Activated T-helper 2 cell treated with anti-CD3 and anti-CD28 coated beads, Interferon-gamma antibody, Interleukin-2, Interleukin-4, amounts not matched to agents 10 μg/mL and 5 μg/mL and 100 μg/mL, durations not matched to agents 14 hours and 24 hours and 36 hours (primary cell): ENCODE measurements at regions of chr6 and their contacts with region 1.

Region 1: DNA sequence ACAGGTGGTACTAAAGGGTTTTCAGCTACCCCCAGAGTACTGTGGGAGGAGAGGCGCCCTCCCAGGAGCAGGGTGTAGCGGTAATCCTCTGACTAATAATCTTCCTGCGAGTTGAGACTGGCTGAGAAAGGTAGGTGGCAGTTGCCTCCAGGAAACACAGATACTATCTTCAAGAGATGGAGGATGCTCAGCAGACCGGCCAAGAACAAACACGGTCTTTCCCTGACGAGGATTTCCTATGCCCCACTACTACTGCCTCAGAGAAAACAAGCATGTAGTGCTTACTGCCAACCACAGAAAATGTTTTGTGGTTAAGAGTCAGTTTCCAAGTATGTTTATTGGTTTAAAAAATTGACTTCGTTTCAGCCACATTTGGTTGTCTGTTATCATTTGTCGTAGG is 26.8 kb downstream of the C6orf89 start:
- DNase-seq: peak; percentile 78
- H3K4me3 Mint-ChIP-seq: peak overlapping the region; percentile 71
- H3K27ac Mint-ChIP-seq: peak overlapping the region; percentile 80
- H3K4me1 Mint-ChIP-seq: peaks cover 51% of the 10 kb centered on the region
- H3K27me3 Mint-ChIP-seq: no peaks in the 10 kb centered on the region

Region 2: GRCh38 chr6:36697481-36697903 is 215.1 kb before region 1 on chr6 and contains the start of gene RAB44:
- intact Hi-C with region 1: loop called (anchors 5 kb)
- DNase-seq: no peak
- H3K4me3 Mint-ChIP-seq: no peak within 1 kb of the TSS
- H3K27ac Mint-ChIP-seq: no peak within 1 kb of the TSS
- H3K4me1 Mint-ChIP-seq: peaks cover 33% of the 10 kb centered on the region
- H3K27me3 Mint-ChIP-seq: peaks cover 7% of the 10 kb centered on the region
- total RNA-seq, gene RAB44: not detected in 2 replicates

Region 3: DNA sequence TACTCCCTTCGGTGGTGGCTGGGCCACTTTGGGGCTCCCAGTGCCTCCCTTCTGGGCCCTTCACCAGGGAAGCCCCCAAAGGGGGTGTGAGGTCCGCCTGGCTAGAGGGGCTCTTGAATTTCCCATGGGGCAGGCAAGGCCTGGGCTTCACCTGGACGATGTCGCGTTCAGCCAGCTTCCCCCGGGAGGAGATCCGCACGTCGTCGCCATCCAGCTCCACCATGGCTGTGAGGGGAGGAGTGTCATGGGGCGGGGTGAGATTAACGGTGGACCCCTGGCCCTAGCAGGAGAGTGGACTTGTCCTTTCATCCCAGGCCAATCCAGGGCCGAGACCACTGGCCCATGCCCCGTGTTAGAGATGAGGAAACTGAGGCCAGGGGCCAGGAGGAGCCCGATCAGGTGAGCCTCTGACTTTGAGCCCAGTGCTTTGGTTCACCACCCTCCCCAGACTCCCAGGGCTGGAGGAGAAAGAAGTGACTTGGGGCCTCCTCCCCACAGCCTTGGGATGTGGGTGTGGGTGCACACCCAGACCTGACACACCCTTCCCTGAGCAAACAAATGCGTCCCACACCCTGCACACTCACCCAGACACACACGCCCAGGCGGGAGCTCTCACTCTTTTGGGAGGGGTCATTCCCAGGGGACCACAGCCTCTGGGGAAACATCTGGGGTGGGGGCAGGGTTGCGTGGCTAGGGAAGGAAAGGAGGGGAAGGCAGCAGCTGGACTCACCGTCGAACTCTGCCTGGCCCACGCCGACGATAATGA is 168.9 kb before region 1 on chr6:
- intact Hi-C with region 1: no loop called
- DNase-seq: no peak
- H3K4me3 Mint-ChIP-seq: no peak overlapping the region
- H3K27ac Mint-ChIP-seq: no peak overlapping the region
- H3K4me1 Mint-ChIP-seq: peaks cover 5% of the 10 kb centered on the region
- H3K27me3 Mint-ChIP-seq: peaks cover 4% of the 10 kb centered on the region

Region 4: GRCh38 chr6:36765594-36766398 is 146.8 kb before region 1 on chr6:
- intact Hi-C with region 1: no loop called
- DNase-seq: peak; percentile 74
- H3K4me3 Mint-ChIP-seq: no peak overlapping the region
- H3K27ac Mint-ChIP-seq: peak overlapping the region; percentile 0
- H3K4me1 Mint-ChIP-seq: peaks cover 30% of the 10 kb centered on the region
- H3K27me3 Mint-ChIP-seq: no peaks in the 10 kb centered on the region

Region 5: DNA sequence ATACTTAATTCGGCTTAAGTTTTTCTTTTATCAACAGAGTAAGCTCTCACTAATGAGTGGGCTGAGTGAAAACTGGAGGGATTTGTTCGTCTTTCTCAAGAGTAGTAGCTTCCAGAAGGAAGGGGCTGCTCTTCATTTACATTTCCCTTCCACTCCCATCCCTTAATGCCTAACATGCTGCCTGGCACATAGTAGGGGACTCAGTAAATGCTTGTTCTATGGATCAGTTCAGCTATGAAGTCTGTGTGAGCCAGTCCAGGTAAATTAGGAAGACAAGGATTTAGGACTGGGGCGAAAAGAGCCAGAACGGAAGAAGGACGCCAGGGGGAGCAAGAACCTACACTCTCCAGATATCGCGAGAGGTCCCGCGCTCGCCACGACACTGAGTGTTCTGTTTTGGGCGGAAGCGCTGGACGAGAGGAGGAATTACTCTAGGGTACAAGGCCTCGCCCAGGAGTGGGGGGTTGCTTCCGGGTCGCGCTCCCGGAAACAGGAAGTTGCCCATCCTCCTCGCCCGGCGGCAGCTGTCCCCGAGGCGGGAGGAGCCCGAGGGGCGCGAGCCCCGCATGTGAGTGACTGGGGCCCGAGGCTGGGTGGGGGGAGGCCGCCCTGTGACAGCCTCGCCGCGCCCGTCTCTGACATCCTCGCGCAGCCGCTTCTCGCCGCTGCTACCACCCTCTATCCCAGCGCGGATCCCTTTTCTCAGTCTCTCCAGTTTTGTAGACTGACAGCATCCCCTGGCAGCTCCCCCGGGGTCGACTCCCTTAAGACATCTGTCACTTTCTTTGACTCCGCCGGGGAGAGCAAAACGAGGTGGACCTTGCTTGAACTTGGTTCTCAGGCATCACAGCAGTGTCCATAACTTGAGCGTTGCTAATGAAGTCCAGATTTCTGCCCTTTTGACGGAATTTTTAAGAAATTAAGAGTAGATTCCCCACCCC is 26.9 kb before region 1 on chr6 and contains the start of gene C6orf89:
- intact Hi-C with region 1: loop called (anchors 1 kb)
- DNase-seq: peak; percentile 95
- H3K4me3 Mint-ChIP-seq: peak within 1 kb of the TSS; percentile 87
- H3K27ac Mint-ChIP-seq: peak within 1 kb of the TSS; percentile 80
- H3K4me1 Mint-ChIP-seq: peaks cover 32% of the 10 kb centered on the region
- H3K27me3 Mint-ChIP-seq: no peaks in the 10 kb centered on the region
- total RNA-seq, gene C6orf89: 28.4 and 29.9 TPM in 2 replicates

Region 6: GRCh38 chr6:36954262-36954931 is 41.8 kb after region 1 on chr6 and contains the start of gene PI16:
- intact Hi-C with region 1: loop called (anchors 1 kb)
- DNase-seq: no peak
- H3K4me3 Mint-ChIP-seq: no peak within 1 kb of the TSS
- H3K27ac Mint-ChIP-seq: no peak within 1 kb of the TSS
- H3K4me1 Mint-ChIP-seq: peaks cover 34% of the 10 kb centered on the region
- H3K27me3 Mint-ChIP-seq: peaks cover 28% of the 10 kb centered on the region
- total RNA-seq, gene PI16: not detected in 2 replicates

Region 7: DNA sequence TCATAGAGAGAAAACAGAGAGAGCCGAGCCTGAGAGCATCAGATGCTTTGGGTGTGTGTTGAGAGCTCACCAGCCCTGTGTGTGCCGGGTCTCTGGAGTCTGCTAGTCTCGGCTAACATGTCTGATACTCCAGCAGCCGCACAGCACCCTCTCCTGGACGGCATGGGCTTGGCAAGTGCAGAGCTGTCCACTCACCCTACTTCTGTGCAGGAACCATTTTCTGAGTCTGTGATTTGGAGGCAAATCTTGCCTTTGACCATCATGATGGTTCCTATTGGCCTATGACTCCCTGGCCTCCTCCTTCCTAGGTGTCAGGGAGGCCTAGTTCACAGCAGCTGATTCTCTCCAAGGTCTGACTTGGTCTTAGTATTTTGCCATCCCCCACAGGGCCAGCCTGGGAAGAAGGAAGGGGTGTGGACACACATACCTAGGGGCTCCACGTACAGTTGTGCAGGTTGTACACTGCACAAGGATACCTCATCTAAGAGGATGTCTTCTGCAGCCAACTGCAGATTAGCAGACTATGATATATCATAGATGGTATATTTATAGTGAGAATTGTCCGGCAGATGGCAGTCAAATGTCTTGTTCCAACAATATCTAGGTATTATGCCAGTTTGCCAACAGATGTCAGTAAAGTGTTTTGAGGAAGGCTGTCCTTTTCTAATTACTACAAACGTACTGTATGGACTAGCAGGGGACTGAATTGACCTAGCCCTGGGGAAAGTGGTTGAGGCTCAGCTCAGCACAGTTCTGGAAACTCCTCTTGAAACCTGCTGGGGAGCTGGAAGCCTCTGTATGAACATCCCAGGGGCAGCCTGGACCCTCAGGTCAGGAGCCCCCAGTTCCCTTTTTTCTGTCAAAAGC is 105.8 kb after region 1 on chr6:
- intact Hi-C with region 1: loop called (anchors 1 kb)
- DNase-seq: peak; percentile 87
- H3K4me3 Mint-ChIP-seq: no peak overlapping the region
- H3K27ac Mint-ChIP-seq: peak overlapping the region; percentile 78
- H3K4me1 Mint-ChIP-seq: peaks cover 46% of the 10 kb centered on the region
- H3K27me3 Mint-ChIP-seq: no peaks in the 10 kb centered on the region

Region 8: DNA sequence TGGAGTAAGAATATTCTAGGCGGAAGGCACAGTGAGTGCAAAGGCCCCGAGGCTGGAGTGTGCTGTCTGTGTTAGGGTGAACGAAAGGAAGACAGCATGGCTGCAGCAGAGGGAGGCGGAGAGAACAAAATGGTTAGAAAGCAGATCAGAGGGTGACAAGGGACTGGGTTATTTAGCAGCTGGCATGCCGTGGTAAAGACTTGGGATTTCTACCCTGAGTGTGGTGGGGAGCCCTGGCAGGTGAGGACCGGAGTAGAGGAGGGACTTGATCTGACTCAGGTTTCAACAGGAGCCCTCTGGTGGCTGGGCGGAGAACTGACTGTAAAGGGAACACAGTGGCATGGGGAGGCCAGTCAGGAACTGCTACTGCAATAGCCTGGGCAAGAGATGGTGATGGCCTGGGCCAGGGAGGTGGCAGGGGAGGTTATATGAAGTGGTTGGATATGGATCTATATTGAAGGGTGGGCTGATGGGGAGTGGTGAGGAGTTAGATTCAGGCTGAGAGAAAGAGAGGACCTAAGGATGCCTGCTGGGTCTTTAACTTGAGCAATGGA is 295.4 kb after region 1 on chr6:
- intact Hi-C with region 1: loop called (anchors 10 kb)
- DNase-seq: peak; percentile 85
- H3K4me3 Mint-ChIP-seq: peak overlapping the region; percentile 15
- H3K27ac Mint-ChIP-seq: peak overlapping the region; percentile 76
- H3K4me1 Mint-ChIP-seq: peaks cover 57% of the 10 kb centered on the region
- H3K27me3 Mint-ChIP-seq: no peaks in the 10 kb centered on the region

Region 9: GRCh38 chr6:37257634-37258404 is 345.2 kb after region 1 on chr6 and contains the starts of genes TBC1D22B and TMEM217:
- intact Hi-C with region 1: loop called (anchors 1 kb)
- DNase-seq: peak; percentile 94
- H3K4me3 Mint-ChIP-seq: peak within 1 kb of the TSS; percentile 97
- H3K27ac Mint-ChIP-seq: peak within 1 kb of the TSS; percentile 98
- H3K4me1 Mint-ChIP-seq: peaks cover 45% of the 10 kb centered on the region
- H3K27me3 Mint-ChIP-seq: no peaks in the 10 kb centered on the region
- total RNA-seq, gene TBC1D22B: 13.8 and 14.6 TPM in 2 replicates
- total RNA-seq, gene TMEM217: 4.5 and 4.8 TPM in 2 replicates